BJ (cell line): ENCODE measurements at regions of chr3 and their contacts with region 1.

Region 1: GRCh38 chr3:170811928-170812591 is 57.9 kb downstream of the RPL22L1 start:
- DNase-seq: no peak
- H3K4me3 ChIP-seq: no peak overlapping the region
- H3K27me3 ChIP-seq: no peaks in the 10 kb centered on the region
- CTCF ChIP-seq: peak; percentile 84

Region 2: DNA sequence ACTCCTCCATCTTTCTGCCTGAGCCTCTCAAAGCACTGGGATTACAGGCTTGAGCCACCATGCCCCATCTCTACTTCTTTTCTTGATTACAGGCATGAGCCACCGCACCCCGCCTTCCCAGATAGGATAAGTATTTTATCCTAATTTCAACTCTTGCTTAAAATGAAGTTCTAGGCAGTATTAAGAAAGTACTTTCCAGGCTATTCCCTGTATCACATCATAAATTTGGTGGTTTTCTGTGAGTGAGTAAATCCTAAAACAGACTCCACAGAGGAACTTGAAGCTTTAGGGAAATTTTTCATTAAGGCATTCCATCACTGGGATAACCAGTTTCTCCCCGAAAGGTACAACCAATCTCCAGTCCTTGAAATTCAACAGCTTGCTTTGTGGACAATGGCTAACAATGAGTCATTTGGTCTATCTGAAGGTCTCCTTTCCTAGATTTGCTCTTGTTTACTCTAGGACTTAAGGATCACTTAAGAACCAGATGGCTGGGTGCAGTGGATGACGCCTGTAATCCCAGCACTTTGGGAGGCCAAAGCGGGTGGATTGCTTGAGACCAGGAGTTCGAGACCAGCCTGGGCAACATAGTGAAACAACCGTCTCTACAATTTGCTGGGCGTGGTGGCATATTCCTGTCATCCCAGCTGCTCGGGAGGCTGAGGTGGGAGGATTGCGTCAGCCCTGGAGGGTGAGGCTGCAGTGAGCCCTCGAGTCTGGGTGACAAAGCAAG is 504.2 kb before region 1 on chr3:
- CTCF ChIA-PET with region 1: interaction called, 11 read pairs
- POLR2A ChIA-PET with region 1: no interaction called
- DNase-seq: no peak
- H3K4me3 ChIP-seq: no peak overlapping the region
- H3K27me3 ChIP-seq: no peaks in the 10 kb centered on the region
- CTCF ChIP-seq: no peak

Region 3: DNA sequence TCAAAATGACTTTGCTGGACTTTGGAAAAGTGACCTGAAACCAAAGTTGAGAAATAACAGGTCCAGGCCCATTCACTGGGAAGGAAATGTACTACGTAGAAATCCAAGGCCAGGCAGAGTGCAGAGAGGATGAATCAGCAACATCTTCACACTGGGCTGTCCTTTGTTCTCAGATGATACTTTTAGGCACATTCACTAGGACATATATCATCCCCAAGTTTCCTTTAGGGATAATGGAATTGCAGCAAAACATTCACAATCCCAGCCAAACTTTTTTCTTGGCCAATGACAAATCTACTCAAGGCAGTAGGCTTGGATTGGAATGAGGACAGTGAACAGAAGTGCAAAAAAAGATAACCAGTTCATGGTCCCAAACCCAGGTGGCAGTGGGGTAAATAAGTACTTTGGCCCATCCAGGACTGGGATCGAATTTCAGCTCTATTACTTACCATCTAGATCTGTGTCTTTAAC is 318.3 kb before region 1 on chr3:
- CTCF ChIA-PET with region 1: interaction called, 14 read pairs
- POLR2A ChIA-PET with region 1: no interaction called
- DNase-seq: no peak
- H3K4me3 ChIP-seq: no peak overlapping the region
- H3K27me3 ChIP-seq: no peaks in the 10 kb centered on the region
- CTCF ChIP-seq: no peak

Region 4: DNA sequence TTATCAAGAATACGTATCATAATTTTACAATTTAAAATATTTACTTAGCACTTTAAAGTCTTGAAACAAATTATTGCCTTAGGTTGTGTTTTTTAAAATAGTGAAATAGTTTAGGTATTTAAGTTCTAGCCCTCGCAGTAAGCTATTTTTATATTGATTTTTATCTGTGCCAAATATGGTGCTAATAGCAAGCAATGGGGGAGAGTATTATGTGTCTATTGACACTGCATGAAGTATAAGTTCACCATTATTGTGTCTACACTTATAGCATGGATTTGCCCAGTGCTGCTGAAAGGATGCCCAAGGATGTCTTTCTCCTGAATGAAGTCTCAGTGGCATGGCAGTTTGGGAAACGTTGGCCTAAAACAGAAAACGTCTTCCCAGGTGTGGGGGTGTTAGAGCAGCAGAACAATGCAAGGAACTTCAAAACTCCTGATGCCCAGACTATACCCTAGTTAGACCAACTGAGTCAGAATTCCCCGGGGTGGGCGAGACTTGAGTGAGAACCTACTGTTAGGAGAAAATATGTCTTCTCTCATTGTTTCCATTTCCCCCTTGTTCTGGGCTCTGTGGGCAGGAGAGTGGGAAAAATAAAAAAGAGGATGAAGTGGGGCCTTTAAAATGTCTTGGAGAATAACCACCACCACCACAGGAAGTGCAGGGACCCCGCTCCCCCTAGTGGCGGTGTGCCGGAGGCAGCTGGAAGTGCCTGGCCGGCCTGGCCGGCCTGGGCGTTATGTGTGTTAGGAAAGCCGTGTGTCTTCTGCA is 122.0 kb before region 1 on chr3:
- CTCF ChIA-PET with region 1: interaction called, 14 read pairs
- POLR2A ChIA-PET with region 1: no interaction called
- DNase-seq: no peak
- H3K4me3 ChIP-seq: no peak overlapping the region
- H3K27me3 ChIP-seq: no peaks in the 10 kb centered on the region
- CTCF ChIP-seq: peak; percentile 61

Region 5: GRCh38 chr3:170726976-170727661 is 84.9 kb before region 1 on chr3:
- CTCF ChIA-PET with region 1: interaction called, 10 read pairs
- POLR2A ChIA-PET with region 1: no interaction called
- DNase-seq: no peak
- H3K4me3 ChIP-seq: no peak overlapping the region
- H3K27me3 ChIP-seq: no peaks in the 10 kb centered on the region
- CTCF ChIP-seq: no peak

Region 6: GRCh38 chr3:170751083-170751898 is 60.8 kb before region 1 on chr3:
- CTCF ChIA-PET with region 1: interaction called, 29 read pairs
- POLR2A ChIA-PET with region 1: no interaction called
- DNase-seq: peak; percentile 59
- H3K4me3 ChIP-seq: no peak overlapping the region
- H3K27me3 ChIP-seq: no peaks in the 10 kb centered on the region
- CTCF ChIP-seq: no peak

Region 7: DNA sequence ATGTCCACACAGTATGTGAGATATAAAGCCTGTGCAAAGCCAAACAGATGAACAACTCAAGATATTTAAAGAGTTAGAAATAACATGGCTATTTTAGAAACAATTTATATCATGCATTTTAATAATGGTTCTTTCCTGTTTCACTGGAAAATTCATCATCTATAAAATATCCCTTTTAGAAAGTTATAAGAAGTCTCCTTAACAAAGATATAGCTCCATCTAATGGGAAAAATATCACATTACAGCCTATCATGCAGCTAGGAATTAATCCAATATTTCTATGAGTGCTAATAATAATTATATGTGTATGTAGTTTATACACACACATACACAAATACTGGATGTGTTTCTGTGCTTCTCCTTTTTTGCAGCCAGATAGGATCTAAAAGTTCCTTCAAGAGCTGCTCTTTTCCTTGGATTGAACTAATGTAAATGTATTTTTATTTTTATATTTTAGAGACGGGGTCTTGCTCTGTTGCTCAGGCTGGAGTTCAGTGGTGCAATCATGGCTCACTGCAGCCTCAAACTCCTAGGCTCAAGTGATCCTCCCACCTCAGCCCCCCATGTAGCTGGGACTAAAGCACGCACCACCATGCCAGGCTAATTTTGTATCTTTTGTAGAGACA is 36.3 kb after region 1 on chr3:
- CTCF ChIA-PET with region 1: interaction called, 12 read pairs
- POLR2A ChIA-PET with region 1: no interaction called
- DNase-seq: no peak
- H3K4me3 ChIP-seq: no peak overlapping the region
- H3K27me3 ChIP-seq: no peaks in the 10 kb centered on the region
- CTCF ChIP-seq: peak; percentile 22; the same call in 1 of the 2 replicates

Region 8: DNA sequence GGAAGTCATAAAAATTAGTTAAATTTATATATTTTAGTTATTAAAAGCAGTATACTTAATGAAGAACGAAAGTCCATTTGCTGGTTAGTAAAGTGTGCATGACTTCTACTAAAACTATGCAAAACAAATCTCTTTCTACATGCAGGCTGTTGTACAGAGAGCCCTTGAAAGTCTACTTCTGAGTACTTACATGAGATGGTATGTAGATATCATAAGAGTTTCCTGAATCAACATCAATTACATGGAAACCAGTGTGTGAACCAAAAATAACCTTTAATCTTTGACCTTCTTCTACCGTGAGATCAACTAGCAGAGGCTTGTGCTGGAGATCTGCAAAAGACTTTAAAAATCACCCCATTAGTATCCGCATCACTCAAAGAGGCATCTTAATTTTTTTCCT is 256.6 kb after region 1 on chr3:
- CTCF ChIA-PET with region 1: no interaction called
- POLR2A ChIA-PET with region 1: no interaction called
- DNase-seq: no peak
- H3K4me3 ChIP-seq: no peak overlapping the region
- H3K27me3 ChIP-seq: no peaks in the 10 kb centered on the region
- CTCF ChIP-seq: no peak

Region 9: GRCh38 chr3:171257251-171258203 is 445.5 kb after region 1 on chr3:
- CTCF ChIA-PET with region 1: no interaction called
- POLR2A ChIA-PET with region 1: no interaction called
- DNase-seq: peak; percentile 60
- H3K4me3 ChIP-seq: no peak overlapping the region
- H3K27me3 ChIP-seq: no peaks in the 10 kb centered on the region
- CTCF ChIP-seq: no peak